Gastrocnemius medialis (tissue), 4 donors: ENCODE measurements at regions of chr9 and their contacts with region 1.

Region 1: DNA sequence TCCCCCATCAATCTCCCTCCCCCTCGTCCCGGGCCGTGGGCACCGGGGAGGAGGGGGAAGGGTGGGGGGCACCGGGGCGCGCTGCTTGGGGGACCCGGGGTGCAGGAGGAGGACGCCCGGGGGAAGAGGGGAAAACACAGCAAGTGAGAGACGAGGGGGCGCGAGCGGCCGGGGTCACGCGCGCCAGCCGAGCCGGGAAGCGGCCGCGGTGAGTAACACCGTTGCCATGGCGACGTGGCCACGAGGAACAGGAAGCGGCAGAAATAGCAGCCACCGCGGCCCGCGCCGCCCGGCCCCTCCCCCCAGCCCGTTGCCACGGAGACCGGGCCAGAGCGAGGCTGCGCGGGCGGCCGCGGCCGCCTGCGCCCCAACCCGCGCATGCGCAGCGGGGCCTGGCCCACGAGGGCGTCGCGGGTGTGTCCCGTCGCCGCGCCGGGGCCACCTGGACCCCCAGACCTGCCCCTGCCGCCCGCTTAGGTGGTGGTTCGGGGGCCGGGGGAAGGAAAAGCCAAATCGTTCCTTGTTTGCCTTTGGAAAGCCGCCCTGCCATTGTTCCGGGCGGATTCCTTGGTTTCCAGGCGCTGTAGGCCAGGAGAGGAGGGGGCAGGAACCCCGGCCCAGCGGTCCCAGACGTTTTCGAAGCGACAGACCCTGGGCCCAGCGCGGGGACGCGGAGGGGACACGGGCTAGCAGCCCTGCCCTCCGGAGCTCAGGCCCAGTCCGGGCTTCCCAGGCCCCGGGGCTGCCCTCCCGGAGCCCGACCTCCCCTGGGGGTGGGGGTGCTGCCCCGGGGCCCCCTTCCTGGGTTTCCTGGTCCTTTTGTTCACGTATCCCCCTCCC is 207.1 kb downstream of the C9orf50 start:
- DNase-seq: peak; percentile 98 to 99
- ATAC-seq: peak; percentile 83 to 88
- H3K4me3 ChIP-seq: peak overlapping the region; percentile 60 to 85 (median 75)
- H3K27ac ChIP-seq: peak overlapping the region; percentile 85 to 100 (median 98)
- H3K4me1 ChIP-seq: peaks cover 10 to 23% of the 10 kb centered on the region in 2 donors
- H3K27me3 ChIP-seq: no peaks in the 10 kb centered on the region
- CTCF ChIP-seq: peak in 1 of 5 experiments; percentile 22
- POLR2A ChIP-seq: peak; percentile 94 to 99

Region 2: GRCh38 chr9:129472651-129473102 is 58.9 kb after region 1 on chr9:
- in situ Hi-C with region 1: no loop called
- intact Hi-C with region 1: no loop called
- DNase-seq: no peak
- ATAC-seq: no peak
- H3K4me3 ChIP-seq: no peak overlapping the region
- H3K27ac ChIP-seq: no peak overlapping the region
- H3K4me1 ChIP-seq: no peaks in the 10 kb centered on the region
- H3K27me3 ChIP-seq: no peaks in the 10 kb centered on the region
- CTCF ChIP-seq: no peak
- POLR2A ChIP-seq: no peak

Region 3: DNA sequence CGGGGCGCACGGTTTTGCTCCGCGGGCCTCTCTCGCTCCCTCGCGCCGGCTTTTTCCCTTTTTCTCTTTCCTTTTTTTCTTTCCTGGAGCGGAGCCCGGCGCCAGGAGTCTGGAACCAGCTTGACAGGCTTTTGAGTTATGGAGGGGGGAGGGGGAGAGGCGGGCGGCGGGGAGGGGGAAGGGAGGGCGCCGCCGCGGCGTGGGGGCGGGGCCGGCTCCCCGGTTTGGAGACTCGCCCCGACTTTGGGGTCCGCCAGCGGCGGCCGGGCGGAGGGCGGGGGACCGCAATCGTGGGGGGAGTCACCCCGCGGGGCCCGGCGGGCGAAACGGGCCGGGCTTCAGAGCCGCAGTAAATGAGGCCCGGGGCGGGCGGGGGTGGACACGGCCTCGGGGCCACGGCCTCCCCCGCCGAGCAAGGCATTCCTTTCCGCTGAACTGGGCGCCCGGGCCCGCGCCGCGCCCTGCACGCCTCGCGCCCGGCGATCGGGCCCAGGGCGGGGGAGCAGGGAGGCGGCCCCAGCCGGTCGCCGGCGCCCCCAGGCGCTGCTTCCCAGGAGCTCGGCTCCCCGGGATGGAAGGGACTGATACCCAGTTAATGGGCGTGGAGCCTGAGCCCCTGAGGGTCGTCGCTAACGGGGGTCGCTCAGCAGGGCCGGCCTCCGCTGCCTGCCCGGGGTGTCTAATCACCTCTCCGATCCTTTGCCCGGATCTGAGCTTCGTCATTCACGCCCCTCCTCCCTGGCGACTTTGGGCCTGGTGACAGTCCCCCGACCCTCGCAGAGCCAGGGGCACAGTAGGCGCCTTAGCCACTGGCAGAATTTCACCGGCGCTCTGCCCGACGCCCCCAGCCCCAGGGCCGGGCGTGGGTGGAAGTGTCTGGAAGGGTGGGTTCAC is 69.0 kb after region 1 on chr9:
- in situ Hi-C with region 1: loop called in 1 of 4 experiments (anchors 10 kb)
- intact Hi-C with region 1: loop called (anchors 2 kb)
- DNase-seq: peak; percentile 67 to 87
- ATAC-seq: peak; percentile 67 to 70
- H3K4me3 ChIP-seq: peak overlapping the region; percentile 57 to 86 (median 69)
- H3K27ac ChIP-seq: peak overlapping the region; percentile 96 to 99 (median 98)
- H3K4me1 ChIP-seq: peaks cover 29 to 41% of the 10 kb centered on the region in 2 donors
- H3K27me3 ChIP-seq: no peaks in the 10 kb centered on the region
- CTCF ChIP-seq: no peak
- POLR2A ChIP-seq: peak; percentile 19 to 46

Region 4: GRCh38 chr9:129626079-129626624 is 212.4 kb after region 1 on chr9 and contains the start of gene NTMT1:
- in situ Hi-C with region 1: no loop called
- intact Hi-C with region 1: loop called (anchors 5 kb)
- DNase-seq: peak; percentile 77 to 80
- ATAC-seq: peak; percentile 90
- H3K4me3 ChIP-seq: peak within 1 kb of the TSS; percentile 71 to 91 (median 77)
- H3K27ac ChIP-seq: peak within 1 kb of the TSS; percentile 90 to 98 (median 92)
- H3K4me1 ChIP-seq: peaks cover 44% of the 10 kb centered on the region in 2 donors
- H3K27me3 ChIP-seq: peaks cover 0 to 7% (median under 1%) of the 10 kb centered on the region in 3 donors
- CTCF ChIP-seq: peak in 2 of 5 experiments; percentile 45 to 53
- POLR2A ChIP-seq: peak; percentile 99
- total RNA-seq, gene NTMT1: 37.8 to 82.1 (median 48.1) TPM

Region 5: DNA sequence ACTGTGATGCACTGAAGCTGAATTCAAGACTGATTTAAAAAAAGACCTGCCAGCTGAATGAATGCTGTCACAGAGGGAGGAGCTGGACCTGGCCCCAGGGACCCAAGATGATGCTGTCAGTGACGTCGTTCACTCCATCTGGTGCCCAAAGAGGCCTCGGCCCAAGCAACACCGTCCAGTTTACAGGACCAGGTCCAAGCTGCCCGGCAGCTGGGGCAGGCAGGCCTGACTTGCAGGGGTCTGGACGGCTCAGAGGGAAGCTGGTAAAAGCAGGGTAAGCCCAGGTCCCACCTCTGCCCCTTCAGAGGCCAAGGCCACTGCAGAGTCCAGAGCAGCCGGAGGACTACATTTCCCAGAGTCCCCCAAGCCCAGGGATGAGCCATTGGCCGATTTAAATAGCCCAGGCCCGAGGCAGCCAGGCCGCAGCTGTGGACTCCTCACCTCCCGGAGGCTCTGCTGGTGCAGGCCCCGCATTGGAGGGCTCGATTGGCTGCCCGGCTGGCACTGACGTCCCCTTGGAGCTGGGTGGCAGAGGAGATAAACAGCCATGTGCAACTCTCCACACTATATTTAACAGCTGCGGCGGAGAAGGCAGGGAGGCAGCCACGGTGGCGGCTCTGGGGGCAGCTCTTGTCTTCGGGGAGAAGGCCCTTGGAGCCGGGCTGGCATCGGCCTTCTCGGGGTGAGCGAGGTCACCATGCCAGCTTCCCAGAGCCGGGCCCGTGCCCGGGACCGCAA is 1875.7 kb after region 1 on chr9 and contains the start of gene PLPP7:
- in situ Hi-C with region 1: no loop called
- intact Hi-C with region 1: no loop called
- DNase-seq: peak; percentile 92 to 97
- ATAC-seq: peak; percentile 77 to 84
- H3K4me3 ChIP-seq: peak within 1 kb of the TSS; percentile 58 to 80 (median 67)
- H3K27ac ChIP-seq: peak within 1 kb of the TSS; percentile 96 to 100 (median 98)
- H3K4me1 ChIP-seq: peaks cover 50 to 64% of the 10 kb centered on the region in 2 donors
- H3K27me3 ChIP-seq: no peaks in the 10 kb centered on the region
- CTCF ChIP-seq: peak in 1 of 5 experiments; percentile 12
- POLR2A ChIP-seq: peak; percentile 98
- total RNA-seq, gene PLPP7: 110 to 395 (median 184) TPM